Heart right ventricle (tissue), 16 donors: ENCODE measurements at regions of chr7 and their contacts with region 1.

Region 1: DNA sequence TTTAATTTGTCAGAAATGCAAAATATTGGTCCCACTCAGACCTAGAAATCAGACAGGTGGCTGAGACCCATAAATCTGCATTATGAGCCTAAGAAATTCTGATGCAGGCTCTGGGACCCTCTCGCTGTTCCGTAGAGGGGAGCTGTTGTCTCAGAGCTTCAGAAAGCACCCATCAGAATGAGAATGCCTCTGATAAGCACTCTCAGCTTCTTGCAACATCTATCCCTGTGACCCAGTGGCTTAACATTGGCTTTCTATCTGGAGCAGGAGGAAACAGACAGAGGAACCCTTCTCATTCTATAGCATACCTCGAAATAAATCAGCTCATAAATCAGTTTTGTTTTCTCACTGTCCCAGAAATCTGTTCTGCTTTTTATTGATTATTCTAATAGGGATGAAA is 184.6 kb upstream of the SP4 start:
- DNase-seq: no peak
- ATAC-seq: no peak
- H3K4me3 ChIP-seq: no peak overlapping the region
- H3K27ac ChIP-seq: no peak overlapping the region
- H3K4me1 ChIP-seq: no peaks in the 10 kb centered on the region
- H3K27me3 ChIP-seq: peaks cover 0 to 65% (median 21%) of the 10 kb centered on the region in 7 donors
- CTCF ChIP-seq: no peak

Region 2: DNA sequence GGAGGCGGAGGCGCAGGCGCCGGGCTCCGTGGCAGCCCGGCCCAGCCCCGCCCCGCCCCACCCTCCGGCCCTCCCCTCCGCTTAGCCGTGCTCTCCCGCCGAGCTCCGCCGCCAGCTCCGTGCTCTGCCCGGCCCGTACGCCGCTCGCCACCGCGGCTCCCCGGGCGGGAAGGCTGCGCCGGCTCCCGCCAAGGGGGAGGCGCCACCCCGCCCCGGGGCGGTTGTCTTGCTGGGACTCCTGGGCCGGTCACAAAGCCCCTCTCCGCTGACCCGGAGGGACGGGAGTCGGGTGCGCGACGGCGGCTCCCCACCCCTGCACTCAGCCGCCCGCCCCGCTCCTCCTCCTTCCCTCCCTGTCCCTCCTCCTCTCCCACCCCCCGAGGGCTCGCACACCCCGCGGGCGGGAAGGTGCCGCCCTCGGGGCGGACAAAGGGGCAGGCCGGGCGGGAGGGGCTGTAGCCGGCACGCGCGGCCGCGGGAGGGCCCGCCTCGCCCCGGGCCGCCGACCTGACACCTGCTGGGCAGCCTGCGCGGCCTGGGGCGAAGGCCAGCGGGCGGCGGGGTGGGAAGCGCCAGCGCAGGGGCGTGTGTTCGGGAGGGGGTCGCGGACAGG is 445.1 kb before region 1 on chr7:
- intact Hi-C with region 1: loop called in 1 of 10 experiments (anchors 10 kb)
- DNase-seq: peak in 1 of 2 donors; percentile 32
- ATAC-seq: peak in 6 of 8 donors; percentile 28 to 91 (median 69)
- H3K4me3 ChIP-seq: peak overlapping the region in 9 of 10 donors; percentile 34 to 58 (median 46)
- H3K27ac ChIP-seq: no peak overlapping the region
- H3K4me1 ChIP-seq: peaks cover 4 to 20% (median 8%) of the 10 kb centered on the region in 9 donors
- H3K27me3 ChIP-seq: peaks cover 29 to 98% (median 89%) of the 10 kb centered on the region in 7 donors
- CTCF ChIP-seq: no peak

Region 3: DNA sequence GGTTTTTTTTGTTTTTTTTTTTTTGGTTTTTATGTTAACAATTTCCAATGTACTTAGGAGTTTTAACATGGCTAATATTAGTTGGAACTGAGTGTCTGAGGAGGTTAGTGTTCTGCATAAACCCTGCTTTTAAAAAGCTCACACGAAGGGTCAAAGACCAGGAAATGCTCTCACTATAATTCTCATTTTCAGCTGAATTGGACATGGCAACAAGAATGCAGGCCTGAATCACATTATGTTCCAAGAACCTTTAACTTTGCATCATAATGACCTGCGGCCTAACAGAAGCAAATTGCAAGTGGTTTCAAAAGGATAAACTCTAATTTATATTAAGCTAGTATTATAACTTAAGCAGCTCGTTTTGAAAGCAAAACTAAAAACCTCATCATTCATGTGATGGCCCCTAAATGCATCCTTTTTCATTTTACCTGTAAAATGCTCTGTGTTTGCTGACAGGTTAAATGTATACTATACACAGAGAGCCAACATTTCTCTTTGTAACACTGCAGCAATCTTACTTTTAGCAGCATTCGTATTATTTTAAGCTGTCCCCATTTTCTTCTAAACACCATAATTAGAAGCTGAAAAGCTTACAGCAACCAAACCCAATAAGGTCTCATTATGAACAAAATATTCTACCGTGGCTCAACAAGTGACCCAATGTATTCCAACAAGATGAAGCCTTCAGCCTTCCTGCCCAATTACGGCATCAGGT is 58.2 kb before region 1 on chr7:
- intact Hi-C with region 1: no loop called
- DNase-seq: no peak
- ATAC-seq: no peak
- H3K4me3 ChIP-seq: no peak overlapping the region
- H3K27ac ChIP-seq: no peak overlapping the region
- H3K4me1 ChIP-seq: no peaks in the 10 kb centered on the region
- H3K27me3 ChIP-seq: peaks cover 0 to 4% (median 0%) of the 10 kb centered on the region in 7 donors
- CTCF ChIP-seq: no peak